ENCODE measurements at regions of chr15 and their contacts with region 1.

Region 1: GRCh38 chr15:44450172-44450571 is 22.7 kb downstream of the CTDSPL2 start:
- DNase-seq: no peak
- ATAC-seq: no peak
- H3K4me3 ChIP-seq: no peak overlapping the region
- H3K4me3 Mint-ChIP-seq: no peak overlapping the region
- H3K27ac ChIP-seq: no peak overlapping the region
- H3K27ac Mint-ChIP-seq: no peak overlapping the region
- H3K4me1 ChIP-seq: peaks cover 0 to 17% of the 10 kb centered on the region in 2 experiments
- H3K4me1 Mint-ChIP-seq: peaks cover 28 to 49% (median 45%) of the 10 kb centered on the region in 3 donors
- H3K27me3 ChIP-seq: no peaks in the 10 kb centered on the region
- H3K27me3 Mint-ChIP-seq: no peaks in the 10 kb centered on the region

Region 2: DNA sequence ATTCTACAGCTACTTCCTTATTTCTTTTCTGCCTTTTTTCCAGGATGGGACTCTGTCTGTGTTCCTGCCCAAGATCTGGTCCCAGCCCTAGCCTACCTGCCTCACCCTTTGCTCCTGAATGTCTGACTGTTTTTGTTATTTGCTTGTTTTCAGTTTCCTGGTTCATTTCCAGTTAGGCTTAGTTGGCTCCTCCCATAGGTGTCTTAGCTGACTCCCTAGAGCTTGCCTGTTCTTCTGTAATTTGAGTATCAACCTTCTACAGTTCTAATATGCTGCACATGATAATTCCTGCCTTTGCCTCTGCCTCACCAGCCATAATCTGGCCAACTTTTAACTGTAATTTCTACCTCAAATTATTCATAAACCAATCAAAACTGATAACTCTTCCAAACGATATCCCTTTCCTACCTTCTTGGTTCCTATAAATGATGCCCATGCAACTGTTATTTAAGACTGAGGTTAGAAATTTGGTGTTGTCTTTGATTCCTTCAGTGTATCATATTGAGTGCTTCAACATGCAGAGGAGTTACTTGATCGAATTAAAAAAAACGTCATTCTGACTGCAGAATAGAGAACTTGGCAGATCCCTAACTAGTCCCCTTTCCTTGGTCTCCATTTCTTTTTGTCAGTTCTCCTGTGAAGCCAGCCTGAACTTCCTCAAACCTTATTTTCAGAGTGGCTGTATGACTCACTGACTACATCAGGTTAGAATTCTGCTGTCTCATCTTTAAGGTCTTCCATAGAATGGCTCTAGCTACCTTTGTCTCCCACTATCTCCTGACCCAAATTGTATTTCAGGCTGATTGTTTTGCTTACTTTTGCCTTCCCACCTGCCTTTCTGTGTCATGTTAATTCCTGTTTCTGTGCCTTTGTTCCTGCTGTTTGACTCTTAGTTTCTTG is 153.3 kb before region 1 on chr15:
- CTCF ChIA-PET with region 1: no interaction called
- POLR2A ChIA-PET with region 1: interaction called in 1 of 2 experiments, 10 read pairs
- DNase-seq: no peak
- ATAC-seq: no peak
- H3K4me3 ChIP-seq: no peak overlapping the region
- H3K4me3 Mint-ChIP-seq: no peak overlapping the region
- H3K27ac ChIP-seq: no peak overlapping the region
- H3K27ac Mint-ChIP-seq: peak overlapping the region; percentile 59 to 78
- H3K4me1 ChIP-seq: peaks cover 2% of the 10 kb centered on the region in 2 experiments
- H3K4me1 Mint-ChIP-seq: peaks cover 51 to 63% (median 54%) of the 10 kb centered on the region in 3 donors
- H3K27me3 ChIP-seq: no peaks in the 10 kb centered on the region
- H3K27me3 Mint-ChIP-seq: no peaks in the 10 kb centered on the region

Region 3: DNA sequence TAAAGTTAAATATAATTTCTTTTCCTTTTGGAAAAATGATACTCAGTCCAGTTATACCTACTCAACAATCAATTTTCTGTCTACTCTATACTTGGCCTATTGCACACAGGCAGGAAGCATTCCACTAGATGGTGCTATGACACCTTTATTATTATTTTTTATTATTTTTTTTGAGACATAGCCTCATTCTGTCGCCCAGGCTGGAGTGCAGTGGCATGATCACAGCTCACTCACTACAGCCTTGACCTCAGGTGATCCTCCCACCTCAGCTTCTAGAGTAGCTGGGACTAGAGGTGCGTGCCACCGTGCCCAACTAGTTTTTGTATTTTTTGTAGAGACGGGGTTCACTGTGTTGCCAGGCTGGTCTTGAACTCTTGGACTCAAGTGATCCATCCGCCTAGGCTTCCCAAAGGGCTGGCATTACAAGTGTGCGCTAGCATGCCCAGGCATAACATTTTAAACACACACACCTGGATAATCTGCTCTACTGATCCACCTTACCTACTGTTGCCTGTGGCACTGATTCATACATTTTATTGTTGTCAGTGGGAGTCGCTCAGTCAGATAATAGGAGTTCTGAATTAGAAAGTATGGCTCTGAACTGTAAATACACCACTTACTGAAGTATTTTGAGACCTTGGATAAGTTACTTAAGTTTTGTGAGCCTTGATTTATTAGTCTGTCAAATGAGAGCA is 143.0 kb after region 1 on chr15:
- CTCF ChIA-PET with region 1: no interaction called
- POLR2A ChIA-PET with region 1: no interaction called
- DNase-seq: peak in 16 of 35 experiments; percentile 2 to 71 (median 7)
- ATAC-seq: peak; percentile 61 to 83 (median 80)
- H3K4me3 ChIP-seq: no peak overlapping the region
- H3K4me3 Mint-ChIP-seq: no peak overlapping the region
- H3K27ac ChIP-seq: no peak overlapping the region
- H3K27ac Mint-ChIP-seq: peak overlapping the region in 1 of 2 donors; percentile 84
- H3K4me1 ChIP-seq: no peaks in the 10 kb centered on the region
- H3K4me1 Mint-ChIP-seq: peaks cover 12 to 24% (median 15%) of the 10 kb centered on the region in 3 donors
- H3K27me3 ChIP-seq: no peaks in the 10 kb centered on the region
- H3K27me3 Mint-ChIP-seq: no peaks in the 10 kb centered on the region

Region 4: DNA sequence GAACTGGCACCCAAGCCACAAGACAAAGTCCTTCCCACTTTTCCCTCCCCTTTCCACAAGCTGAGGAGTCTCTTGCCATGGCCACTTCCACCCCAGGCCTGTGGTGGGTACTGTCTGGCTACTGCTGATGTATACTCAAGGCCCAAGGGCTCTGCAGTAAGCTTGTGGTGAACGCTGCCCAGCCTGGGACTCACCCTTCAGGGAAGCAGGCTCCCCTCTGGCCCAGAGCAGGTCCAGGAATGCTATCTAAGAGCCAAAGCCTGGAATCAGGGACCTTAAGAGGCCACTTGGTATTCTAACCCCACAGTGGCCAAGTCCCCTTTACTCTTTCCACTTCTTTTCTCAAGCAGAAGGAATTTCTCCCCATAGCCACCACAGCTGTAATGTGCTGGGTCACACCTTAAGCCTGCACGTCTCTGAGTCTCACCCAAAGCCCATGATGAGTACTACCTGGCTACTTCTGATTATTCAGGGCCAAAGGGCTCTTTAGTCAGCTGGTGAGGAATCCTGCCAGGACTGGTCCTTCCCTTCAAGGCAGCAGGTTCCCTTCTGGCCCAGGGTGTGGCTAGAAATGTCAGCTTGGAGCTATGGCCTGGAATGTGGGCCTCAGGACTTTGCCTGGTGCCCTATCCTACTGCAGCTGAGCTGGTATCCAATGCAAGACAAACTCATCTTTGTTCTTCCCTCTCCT is 256.9 kb after region 1 on chr15:
- CTCF ChIA-PET with region 1: no interaction called
- POLR2A ChIA-PET with region 1: no interaction called
- DNase-seq: no peak
- ATAC-seq: no peak
- H3K4me3 ChIP-seq: no peak overlapping the region
- H3K4me3 Mint-ChIP-seq: no peak overlapping the region
- H3K27ac ChIP-seq: no peak overlapping the region
- H3K27ac Mint-ChIP-seq: peak overlapping the region in 1 of 2 donors; percentile 16
- H3K4me1 ChIP-seq: peaks cover 6 to 14% of the 10 kb centered on the region in 2 experiments
- H3K4me1 Mint-ChIP-seq: peaks cover 30 to 42% (median 40%) of the 10 kb centered on the region in 3 donors
- H3K27me3 ChIP-seq: no peaks in the 10 kb centered on the region
- H3K27me3 Mint-ChIP-seq: no peaks in the 10 kb centered on the region

Measured in T-cell (primary cell).